Activated B cell treated with CpG ODN at 0.5 μM for 24 hours (primary cell): ENCODE measurements at regions of chr5 and their contacts with region 1.

Region 1: DNA sequence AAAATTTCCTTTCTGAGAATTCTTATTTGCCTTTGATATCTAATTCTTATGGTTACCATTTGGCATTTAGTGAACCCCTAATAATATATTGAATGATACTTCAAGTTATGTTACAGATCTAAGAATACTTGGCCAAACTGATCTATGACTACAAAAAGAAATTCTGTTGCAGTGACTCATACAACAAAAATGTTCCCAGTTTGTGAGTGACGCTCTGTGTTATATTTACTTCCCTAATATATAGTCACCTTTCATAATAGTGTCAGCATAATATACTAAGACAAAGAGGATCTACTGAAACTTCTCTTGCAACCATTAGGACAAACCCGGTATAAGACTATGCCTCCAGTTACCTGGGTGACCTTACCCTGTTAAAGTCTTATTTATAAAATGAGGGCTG is 216.9 kb upstream of the TLX3 start:
- DNase-seq: no peak
- ATAC-seq: no peak
- H3K4me3 Mint-ChIP-seq: no peak overlapping the region
- H3K27ac Mint-ChIP-seq: no peak overlapping the region
- H3K4me1 Mint-ChIP-seq: no peaks in the 10 kb centered on the region
- H3K27me3 Mint-ChIP-seq: no peaks in the 10 kb centered on the region
- CTCF ChIP-seq: no peak

Region 2: GRCh38 chr5:171127314-171127713 is 35.1 kb after region 1 on chr5:
- CTCF ChIA-PET with region 1: no interaction called
- POLR2A ChIA-PET with region 1: no interaction called
- intact Hi-C with region 1: loop called (anchors 1 kb)
- DNase-seq: no peak
- ATAC-seq: no peak
- H3K4me3 Mint-ChIP-seq: no peak overlapping the region
- H3K27ac Mint-ChIP-seq: no peak overlapping the region
- H3K4me1 Mint-ChIP-seq: no peaks in the 10 kb centered on the region
- H3K27me3 Mint-ChIP-seq: peaks cover 1% of the 10 kb centered on the region
- CTCF ChIP-seq: no peak

Region 3: DNA sequence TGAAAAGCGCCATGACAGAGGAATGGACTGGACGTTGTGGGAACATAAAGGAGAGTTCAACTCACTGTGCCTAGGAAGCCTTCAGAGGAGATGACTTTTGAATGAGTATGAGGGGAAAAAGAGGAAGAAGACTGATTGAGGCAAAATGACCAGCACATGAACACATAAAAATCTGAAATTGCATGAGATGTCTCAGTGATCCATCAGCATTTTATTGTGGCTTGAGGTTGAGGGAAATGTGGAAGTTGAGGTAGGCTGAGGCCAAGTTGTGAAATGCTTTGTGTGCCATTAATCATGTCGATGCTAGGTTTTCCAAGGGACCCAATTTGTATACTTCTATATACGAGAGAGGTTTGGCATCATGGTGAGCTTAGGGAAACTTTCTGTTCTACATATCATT is 76.0 kb after region 1 on chr5:
- CTCF ChIA-PET with region 1: no interaction called
- POLR2A ChIA-PET with region 1: no interaction called
- intact Hi-C with region 1: no loop called
- DNase-seq: no peak
- ATAC-seq: no peak
- H3K4me3 Mint-ChIP-seq: no peak overlapping the region
- H3K27ac Mint-ChIP-seq: no peak overlapping the region
- H3K4me1 Mint-ChIP-seq: no peaks in the 10 kb centered on the region
- H3K27me3 Mint-ChIP-seq: no peaks in the 10 kb centered on the region
- CTCF ChIP-seq: no peak